Sciatic nerve (tissue), 2 donors: ENCODE measurements at regions of chr6 and their contacts with region 1.

Region 1: GRCh38 chr6:108844135-108844534 is 4.1 kb upstream of the ARMC2 start:
- DNase-seq: no peak
- ATAC-seq: no peak

Region 2: GRCh38 chr6:108767418-108768165 is 76.5 kb before region 1 on chr6:
- intact Hi-C with region 1: loop called (anchors 2 kb)
- DNase-seq: no peak
- ATAC-seq: no peak

Region 3: DNA sequence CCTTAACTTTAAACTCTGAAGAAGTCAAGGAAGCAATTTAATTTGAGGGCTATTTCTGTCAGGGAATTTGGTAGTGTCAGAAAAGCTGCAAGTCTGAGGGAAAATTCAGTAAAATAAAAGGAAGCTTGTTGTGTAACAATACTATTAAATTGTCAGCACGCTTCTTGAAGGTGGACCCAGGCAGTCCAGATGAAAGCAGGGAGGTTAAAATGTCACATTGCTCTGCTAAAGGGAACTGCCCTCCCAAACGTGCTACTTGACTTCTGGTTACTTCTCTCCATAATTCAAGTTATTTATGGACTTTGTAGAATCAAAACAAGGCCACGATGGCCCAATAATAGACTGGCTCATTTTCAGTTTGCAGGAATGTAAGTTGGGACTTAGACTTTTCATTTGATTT is 24.1 kb before region 1 on chr6:
- intact Hi-C with region 1: no loop called
- DNase-seq: no peak
- ATAC-seq: peak; percentile 79

Region 4: GRCh38 chr6:108873251-108873650 is 29.1 kb after region 1 on chr6:
- intact Hi-C with region 1: loop called (anchors 1 kb)
- DNase-seq: no peak
- ATAC-seq: no peak